CD8-positive, alpha-beta T cell (primary cell): ENCODE measurements at regions of chr1 and their contacts with region 1.

Region 1: GRCh38 chr1:159891275-159892157 is 8.4 kb downstream of the CFAP45 start:
- DNase-seq: peak; percentile 63 to 91 (median 78)
- ATAC-seq: peak; percentile 93
- H3K4me3 ChIP-seq: no peak overlapping the region
- H3K4me3 Mint-ChIP-seq: no peak overlapping the region
- H3K27ac ChIP-seq: no peak overlapping the region
- H3K27ac Mint-ChIP-seq: no peak overlapping the region
- H3K4me1 ChIP-seq: peaks cover 6% of the 10 kb centered on the region
- H3K4me1 Mint-ChIP-seq: peaks cover 17% of the 10 kb centered on the region
- H3K27me3 ChIP-seq: no peaks in the 10 kb centered on the region
- H3K27me3 Mint-ChIP-seq: no peaks in the 10 kb centered on the region
- CTCF ChIP-seq: peak; percentile 96

Region 2: DNA sequence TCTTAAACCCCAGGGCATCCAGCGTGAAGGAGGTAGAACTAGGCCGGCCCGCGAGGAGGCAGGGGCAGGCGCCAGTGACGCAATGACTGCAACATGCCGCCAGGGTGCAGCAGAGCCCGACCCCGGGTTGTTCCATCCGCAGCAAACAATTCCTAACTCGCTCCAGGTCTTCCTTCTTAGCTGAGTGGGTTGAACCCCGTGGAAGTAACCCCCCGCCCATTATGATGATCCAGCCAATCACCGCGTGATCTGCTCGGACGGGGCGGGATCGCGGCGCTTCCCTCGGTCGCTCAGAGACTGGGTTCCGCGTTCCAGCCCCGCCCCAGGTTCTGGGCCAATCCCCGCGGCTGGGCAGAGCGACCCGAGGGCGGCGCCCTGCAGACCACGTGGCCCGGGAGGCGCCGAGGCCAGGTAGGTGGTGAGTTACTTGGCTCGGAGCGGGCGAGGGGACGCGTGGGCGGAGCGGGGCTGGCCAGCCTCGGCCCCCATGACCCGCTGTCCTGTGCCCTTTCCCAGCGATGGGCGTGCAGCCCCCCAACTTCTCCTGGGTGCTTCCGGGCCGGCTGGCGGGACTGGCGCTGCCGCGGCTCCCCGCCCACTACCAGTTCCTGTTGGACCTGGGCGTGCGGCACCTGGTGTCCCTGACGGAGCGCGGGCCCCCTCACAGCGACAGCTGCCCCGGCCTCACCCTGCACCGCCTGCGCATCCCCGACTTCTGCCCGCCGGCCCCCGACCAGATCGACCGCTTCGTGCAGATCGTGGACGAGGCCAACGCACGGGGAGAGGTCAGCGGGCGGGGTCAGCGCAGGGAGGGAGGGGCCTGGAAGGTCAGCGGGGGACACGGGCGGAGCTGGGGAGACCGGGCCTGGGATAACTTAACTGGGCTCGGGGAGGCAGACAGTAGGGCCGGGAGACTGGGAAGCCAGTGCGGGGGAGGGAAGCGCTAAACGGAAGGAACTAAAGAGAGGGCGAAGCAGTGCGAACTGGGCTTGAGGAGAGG is 110.6 kb before region 1 on chr1 and contains the start of gene DUSP23:
- CTCF ChIA-PET with region 1: interaction called, 53 read pairs
- POLR2A ChIA-PET with region 1: interaction called, 3 read pairs
- intact Hi-C with region 1: loop called (anchors 1 kb)
- DNase-seq: peak; percentile 90 to 98 (median 95)
- ATAC-seq: peak; percentile 96
- H3K4me3 ChIP-seq: peak within 1 kb of the TSS; percentile 59 to 69
- H3K4me3 Mint-ChIP-seq: peak within 1 kb of the TSS; percentile 89
- H3K27ac ChIP-seq: peak within 1 kb of the TSS; percentile 16 to 62
- H3K27ac Mint-ChIP-seq: peak within 1 kb of the TSS; percentile 89
- H3K4me1 ChIP-seq: peaks cover 10% of the 10 kb centered on the region
- H3K4me1 Mint-ChIP-seq: peaks cover 28% of the 10 kb centered on the region
- H3K27me3 ChIP-seq: no peaks in the 10 kb centered on the region
- H3K27me3 Mint-ChIP-seq: no peaks in the 10 kb centered on the region
- CTCF ChIP-seq: peak; percentile 78
- total RNA-seq, gene DUSP23: 3.8 to 6.3 TPM

Region 3: GRCh38 chr1:159804924-159805323 is 86.6 kb before region 1 on chr1:
- CTCF ChIA-PET with region 1: interaction called, 531 read pairs
- POLR2A ChIA-PET with region 1: interaction called, 4 read pairs
- intact Hi-C with region 1: loop called in 1 of 2 experiments (anchors 1 kb)
- DNase-seq: no peak
- ATAC-seq: no peak
- H3K4me3 ChIP-seq: peak overlapping the region in 1 of 2 experiments; percentile 51
- H3K4me3 Mint-ChIP-seq: peak overlapping the region; percentile 0
- H3K27ac ChIP-seq: peak overlapping the region in 1 of 2 experiments; percentile 21
- H3K27ac Mint-ChIP-seq: no peak overlapping the region
- H3K4me1 ChIP-seq: peaks cover 11% of the 10 kb centered on the region
- H3K4me1 Mint-ChIP-seq: peaks cover 68% of the 10 kb centered on the region
- H3K27me3 ChIP-seq: no peaks in the 10 kb centered on the region
- H3K27me3 Mint-ChIP-seq: no peaks in the 10 kb centered on the region
- CTCF ChIP-seq: no peak

Region 4: DNA sequence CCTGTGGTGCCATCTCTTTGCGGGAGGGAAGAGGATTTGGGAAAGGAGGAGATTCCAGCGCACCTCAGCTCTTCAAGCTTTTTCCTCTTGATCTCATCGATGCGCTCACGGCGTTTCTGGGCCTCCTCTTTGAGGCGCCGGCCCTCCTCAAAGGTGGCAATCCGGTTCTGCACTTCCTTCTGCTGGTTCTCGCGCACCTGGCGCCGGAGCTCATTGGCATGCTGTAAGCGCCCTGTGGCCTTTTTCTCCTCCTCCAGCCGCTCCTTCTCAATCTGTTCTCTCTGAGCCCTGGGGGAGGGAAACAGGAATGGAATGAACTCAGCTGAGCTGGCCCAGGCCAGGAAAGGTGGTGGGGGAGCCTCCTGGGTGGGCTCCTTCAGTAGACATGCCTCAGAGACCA is 18.6 kb before region 1 on chr1:
- CTCF ChIA-PET with region 1: interaction called, 59 read pairs
- POLR2A ChIA-PET with region 1: no interaction called
- intact Hi-C with region 1: no loop called
- DNase-seq: no peak
- ATAC-seq: no peak
- H3K4me3 ChIP-seq: no peak overlapping the region
- H3K4me3 Mint-ChIP-seq: no peak overlapping the region
- H3K27ac ChIP-seq: no peak overlapping the region
- H3K27ac Mint-ChIP-seq: no peak overlapping the region
- H3K4me1 ChIP-seq: no peaks in the 10 kb centered on the region
- H3K4me1 Mint-ChIP-seq: peaks cover 10% of the 10 kb centered on the region
- H3K27me3 ChIP-seq: no peaks in the 10 kb centered on the region
- H3K27me3 Mint-ChIP-seq: peaks cover 15% of the 10 kb centered on the region
- CTCF ChIP-seq: no peak

Region 5: DNA sequence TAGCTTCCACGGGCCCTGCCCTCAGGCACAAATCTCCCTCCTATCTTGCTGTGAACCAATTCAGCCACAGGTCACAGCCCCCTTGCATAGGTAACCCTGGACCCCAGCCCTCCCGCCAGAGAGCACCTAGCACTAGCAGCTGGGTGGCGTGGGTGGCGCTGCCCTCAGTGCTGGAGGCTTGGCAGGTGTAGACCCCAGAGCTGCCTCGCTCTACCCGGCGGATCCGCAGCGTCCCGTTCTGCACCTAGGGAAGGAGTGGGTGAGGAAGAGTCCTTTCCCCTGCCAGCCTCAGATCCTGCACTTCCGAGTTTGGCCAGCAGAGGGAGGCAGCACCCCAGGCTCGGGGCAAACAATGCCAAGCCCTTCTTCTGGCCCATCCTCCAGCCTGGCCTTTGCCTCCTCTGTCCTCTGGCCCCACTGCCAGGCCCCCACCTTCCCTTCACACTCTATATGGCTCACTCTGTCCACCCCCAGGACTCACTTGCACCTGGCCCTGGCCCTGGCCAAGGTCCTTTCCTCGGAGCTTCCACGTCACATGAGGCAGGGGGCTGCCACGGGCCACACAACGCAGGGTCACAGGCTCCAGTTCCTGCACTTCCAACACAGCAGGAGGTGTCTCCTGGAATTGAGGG is 44.9 kb after region 1 on chr1:
- CTCF ChIA-PET with region 1: interaction called, 46 read pairs
- POLR2A ChIA-PET with region 1: interaction called, 4 read pairs
- intact Hi-C with region 1: loop called in 1 of 2 experiments (anchors 2 kb)
- DNase-seq: peak; percentile 66 to 90 (median 82)
- ATAC-seq: peak; percentile 96
- H3K4me3 ChIP-seq: no peak overlapping the region
- H3K4me3 Mint-ChIP-seq: no peak overlapping the region
- H3K27ac ChIP-seq: no peak overlapping the region
- H3K27ac Mint-ChIP-seq: no peak overlapping the region
- H3K4me1 ChIP-seq: peaks cover 4% of the 10 kb centered on the region
- H3K4me1 Mint-ChIP-seq: peaks cover 6% of the 10 kb centered on the region
- H3K27me3 ChIP-seq: no peaks in the 10 kb centered on the region
- H3K27me3 Mint-ChIP-seq: peaks cover 11% of the 10 kb centered on the region
- CTCF ChIP-seq: peak; percentile 97

Region 6: DNA sequence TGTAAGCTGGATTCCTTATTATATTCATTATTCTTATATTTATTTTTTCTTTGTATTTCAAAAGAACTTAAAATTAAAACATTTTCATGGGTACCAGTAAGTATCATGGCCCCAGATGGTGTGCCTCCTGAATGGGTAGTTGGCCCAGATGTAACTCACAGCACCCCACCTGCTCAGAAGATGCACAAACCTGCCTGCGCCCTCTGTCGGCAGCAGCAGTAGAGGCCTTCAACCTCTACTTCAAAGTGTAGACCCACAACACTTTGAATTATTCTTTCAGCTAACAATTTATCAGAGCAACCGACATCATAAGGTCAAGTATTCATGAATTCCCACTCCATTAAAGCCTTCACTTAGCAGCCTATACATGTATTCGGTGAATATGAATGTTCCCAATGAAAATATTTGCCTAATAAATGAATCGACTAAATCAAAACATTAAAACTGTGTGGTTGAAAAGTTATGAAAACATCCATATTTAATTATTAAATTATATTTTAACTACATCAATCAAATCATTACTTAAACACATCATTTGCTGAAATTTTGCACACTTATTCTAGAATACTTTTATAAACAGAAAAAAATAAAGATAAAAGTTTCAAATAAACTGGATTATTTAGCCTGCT is 114.9 kb after region 1 on chr1:
- CTCF ChIA-PET with region 1: interaction called, 30 read pairs
- POLR2A ChIA-PET with region 1: no interaction called
- intact Hi-C with region 1: loop called (anchors 1 to 2 kb)
- DNase-seq: peak; percentile 47 to 83 (median 75)
- ATAC-seq: peak; percentile 95
- H3K4me3 ChIP-seq: no peak overlapping the region
- H3K4me3 Mint-ChIP-seq: no peak overlapping the region
- H3K27ac ChIP-seq: no peak overlapping the region
- H3K27ac Mint-ChIP-seq: no peak overlapping the region
- H3K4me1 ChIP-seq: no peaks in the 10 kb centered on the region
- H3K4me1 Mint-ChIP-seq: no peaks in the 10 kb centered on the region
- H3K27me3 ChIP-seq: no peaks in the 10 kb centered on the region
- H3K27me3 Mint-ChIP-seq: peaks cover 2% of the 10 kb centered on the region
- CTCF ChIP-seq: peak; percentile 90

Region 7: GRCh38 chr1:160942926-160943325 is 1051.4 kb after region 1 on chr1:
- CTCF ChIA-PET with region 1: no interaction called
- POLR2A ChIA-PET with region 1: no interaction called
- intact Hi-C with region 1: no loop called
- DNase-seq: no peak
- ATAC-seq: no peak
- H3K4me3 ChIP-seq: no peak overlapping the region
- H3K4me3 Mint-ChIP-seq: no peak overlapping the region
- H3K27ac ChIP-seq: no peak overlapping the region
- H3K27ac Mint-ChIP-seq: no peak overlapping the region
- H3K4me1 ChIP-seq: no peaks in the 10 kb centered on the region
- H3K4me1 Mint-ChIP-seq: no peaks in the 10 kb centered on the region
- H3K27me3 ChIP-seq: no peaks in the 10 kb centered on the region
- H3K27me3 Mint-ChIP-seq: no peaks in the 10 kb centered on the region
- CTCF ChIP-seq: no peak